Heart left ventricle (tissue), 16 donors: ENCODE measurements at regions of chr22 and their contacts with region 1.

Region 1: DNA sequence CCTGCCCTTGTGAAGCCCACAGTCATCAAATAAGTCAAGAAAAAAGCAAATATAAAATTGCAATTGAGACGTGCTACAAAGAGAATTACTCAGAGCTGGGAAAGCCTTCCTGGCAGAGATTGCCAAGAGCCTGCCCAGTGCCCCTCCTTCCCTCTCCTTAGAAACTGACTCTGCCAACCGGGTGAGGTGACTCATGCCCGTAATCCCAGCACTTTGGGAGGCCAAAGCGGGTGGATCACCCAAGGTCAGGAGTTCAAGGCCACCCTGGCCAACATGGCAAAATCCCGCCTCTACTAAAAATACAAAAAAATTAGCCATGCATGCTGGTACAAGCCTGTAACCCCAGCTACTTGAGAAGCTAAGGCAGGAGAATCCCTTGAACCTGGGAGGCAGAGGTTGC is 76.0 kb upstream of the RTL6 start:
- DNase-seq: peak in 2 of 5 donors; percentile 61 to 70
- ATAC-seq: peak in 3 of 4 donors; percentile 41 to 81 (median 63)
- H3K4me3 ChIP-seq: no peak overlapping the region
- H3K27ac ChIP-seq: no peak overlapping the region
- H3K4me1 ChIP-seq: peaks cover 0 to 25% (median 5%) of the 10 kb centered on the region in 12 donors
- H3K27me3 ChIP-seq: peaks cover 0 to 8% (median 0%) of the 10 kb centered on the region in 9 donors
- CTCF ChIP-seq: no peak
- POLR2A ChIP-seq: no peak

Region 2: DNA sequence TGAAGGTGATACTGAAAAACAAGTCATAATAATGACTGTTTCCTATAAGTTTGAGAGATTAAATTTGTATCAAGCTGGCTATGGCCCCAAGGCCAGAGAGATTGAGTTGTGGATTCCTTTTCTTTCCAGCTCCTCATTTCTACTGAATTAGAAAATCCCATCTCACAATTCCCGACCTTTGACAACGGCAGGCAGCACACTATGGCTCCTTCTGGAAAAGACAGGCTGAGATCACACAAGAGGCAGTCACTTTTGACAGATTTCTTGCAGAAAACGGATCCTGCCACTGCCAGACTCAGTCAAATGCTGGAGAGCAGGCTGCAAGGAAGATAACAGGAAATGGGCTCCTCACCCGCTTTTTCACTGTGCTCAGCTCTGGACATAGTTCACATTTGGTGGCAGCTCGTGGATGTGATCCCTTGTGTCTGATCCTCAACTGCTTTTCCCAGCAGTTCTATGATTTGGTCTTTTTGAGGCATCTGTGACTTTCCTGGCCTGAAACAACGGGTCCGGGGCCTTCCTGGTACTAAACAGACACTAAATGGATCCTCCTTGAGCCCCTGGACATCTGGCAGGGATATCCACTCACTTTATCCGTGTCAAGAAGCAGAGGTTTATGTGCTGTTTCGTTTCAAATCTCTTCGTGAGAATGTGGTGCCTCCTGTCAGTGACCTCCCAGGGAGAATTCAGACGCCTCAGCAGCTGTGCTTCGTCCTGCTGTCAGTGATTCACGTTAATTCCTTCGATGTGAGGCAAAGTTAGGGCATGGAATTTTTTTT is 49.9 kb before region 1 on chr22:
- intact Hi-C with region 1: loop called in 1 of 10 experiments (anchors 5 kb)
- DNase-seq: peak in 2 of 5 donors; percentile 62 to 65
- ATAC-seq: peak in 1 of 4 donors; percentile 44
- H3K4me3 ChIP-seq: no peak overlapping the region
- H3K27ac ChIP-seq: peak overlapping the region in 3 of 12 donors; percentile 38 to 49 (median 45)
- H3K4me1 ChIP-seq: peaks cover 0 to 16% (median 9%) of the 10 kb centered on the region in 12 donors
- H3K27me3 ChIP-seq: no peaks in the 10 kb centered on the region
- CTCF ChIP-seq: no peak
- POLR2A ChIP-seq: no peak